Naive thymus-derived CD4-positive, alpha-beta T cell (primary cell): ENCODE measurements at regions of chr1 and their contacts with region 1.

Region 1: GRCh38 chr1:85276215-85276977 is at the start of gene BCL10:
- DNase-seq: peak; percentile 95 to 98 (median 97)
- ATAC-seq: peak; percentile 97
- H3K4me3 ChIP-seq: peak within 1 kb of the TSS; percentile 89
- H3K4me3 Mint-ChIP-seq: peak within 1 kb of the TSS; percentile 82 to 95 (median 90)
- H3K27ac ChIP-seq: peak within 1 kb of the TSS; percentile 97
- H3K27ac Mint-ChIP-seq: peak within 1 kb of the TSS; percentile 84 to 97 (median 95)
- H3K4me1 ChIP-seq: peaks cover 17 to 28% of the 10 kb centered on the region in 2 donors
- H3K4me1 Mint-ChIP-seq: peaks cover 36 to 55% (median 47%) of the 10 kb centered on the region in 7 donors
- H3K27me3 ChIP-seq: no peaks in the 10 kb centered on the region
- H3K27me3 Mint-ChIP-seq: peaks cover 0 to 21% (median 0%) of the 10 kb centered on the region in 5 donors
- total RNA-seq, gene BCL10: 30.4 to 53.0 (median 35.4) TPM

Region 2: GRCh38 chr1:84077476-84078107 is 1198.8 kb before region 1 on chr1:
- CTCF ChIA-PET with region 1: no interaction called
- POLR2A ChIA-PET with region 1: no interaction called
- intact Hi-C with region 1: loop called in 1 of 2 experiments (anchors 5 kb)
- DNase-seq: peak; percentile 64 to 79 (median 72)
- ATAC-seq: peak; percentile 97
- H3K4me3 ChIP-seq: peak overlapping the region; percentile 79
- H3K4me3 Mint-ChIP-seq: peak overlapping the region; percentile 84 to 93 (median 90)
- H3K27ac ChIP-seq: peak overlapping the region; percentile 66
- H3K27ac Mint-ChIP-seq: peak overlapping the region; percentile 23 to 87 (median 75)
- H3K4me1 ChIP-seq: peaks cover 9 to 10% of the 10 kb centered on the region in 2 donors
- H3K4me1 Mint-ChIP-seq: peaks cover 6 to 23% (median 14%) of the 10 kb centered on the region in 7 donors
- H3K27me3 ChIP-seq: no peaks in the 10 kb centered on the region
- H3K27me3 Mint-ChIP-seq: peaks cover 0 to 35% (median 0%) of the 10 kb centered on the region in 5 donors

Region 3: GRCh38 chr1:84478876-84479868 is 797.2 kb before region 1 on chr1 and contains the start of gene RPF1:
- CTCF ChIA-PET with region 1: no interaction called
- POLR2A ChIA-PET with region 1: no interaction called
- intact Hi-C with region 1: loop called (anchors 1 kb)
- DNase-seq: peak; percentile 61 to 88 (median 83)
- ATAC-seq: peak; percentile 97
- H3K4me3 ChIP-seq: peak within 1 kb of the TSS; percentile 72
- H3K4me3 Mint-ChIP-seq: peak within 1 kb of the TSS; percentile 88 to 100 (median 98)
- H3K27ac ChIP-seq: peak within 1 kb of the TSS; percentile 80
- H3K27ac Mint-ChIP-seq: peak within 1 kb of the TSS; percentile 98 to 100 (median 99)
- H3K4me1 ChIP-seq: peaks cover 22 to 28% of the 10 kb centered on the region in 2 donors
- H3K4me1 Mint-ChIP-seq: peaks cover 29 to 60% (median 49%) of the 10 kb centered on the region in 7 donors
- H3K27me3 ChIP-seq: peaks cover 0 to 7% of the 10 kb centered on the region in 2 donors
- H3K27me3 Mint-ChIP-seq: peaks cover 21 to 35% (median 26%) of the 10 kb centered on the region in 5 donors
- total RNA-seq, gene RPF1: 35.5 to 52.3 (median 44.1) TPM

Region 4: DNA sequence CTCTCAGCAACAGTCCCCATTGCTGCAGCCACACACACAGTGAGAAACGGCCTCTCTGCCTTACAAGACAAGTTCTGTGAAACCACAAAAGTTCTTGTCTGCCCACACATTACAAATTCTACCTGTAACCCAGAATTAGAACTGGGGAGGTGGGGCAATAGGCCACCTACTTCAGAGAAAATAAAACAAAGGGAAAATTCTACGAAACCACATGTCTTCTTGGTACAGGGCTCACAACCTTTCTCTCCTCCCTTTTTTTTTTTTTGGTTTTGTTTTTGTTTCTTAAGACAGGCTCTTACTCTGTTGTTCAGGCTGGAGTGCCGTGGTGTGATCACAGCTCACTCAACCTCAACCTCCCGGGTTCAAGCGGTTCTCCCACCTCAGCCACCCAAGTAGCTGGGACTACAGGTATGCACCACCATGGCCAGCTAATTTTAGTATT is 413.6 kb before region 1 on chr1:
- CTCF ChIA-PET with region 1: no interaction called
- POLR2A ChIA-PET with region 1: no interaction called
- intact Hi-C with region 1: loop called in 1 of 2 experiments (anchors 5 kb)
- DNase-seq: peak in 8 of 9 donors; percentile 42 to 81 (median 66)
- ATAC-seq: peak; percentile 87
- H3K4me3 ChIP-seq: peak overlapping the region; percentile 44
- H3K4me3 Mint-ChIP-seq: peak overlapping the region; percentile 71 to 89 (median 83)
- H3K27ac ChIP-seq: peak overlapping the region; percentile 67
- H3K27ac Mint-ChIP-seq: peak overlapping the region; percentile 83 to 95 (median 92)
- H3K4me1 ChIP-seq: peaks cover 30 to 46% of the 10 kb centered on the region in 2 donors
- H3K4me1 Mint-ChIP-seq: peaks cover 31 to 69% (median 59%) of the 10 kb centered on the region in 7 donors
- H3K27me3 ChIP-seq: no peaks in the 10 kb centered on the region
- H3K27me3 Mint-ChIP-seq: peaks cover 0 to 6% (median 0%) of the 10 kb centered on the region in 5 donors

Region 5: GRCh38 chr1:85061711-85062424 is 214.5 kb before region 1 on chr1:
- CTCF ChIA-PET with region 1: no interaction called
- POLR2A ChIA-PET with region 1: no interaction called
- intact Hi-C with region 1: loop called in 1 of 2 experiments (anchors 1 kb)
- DNase-seq: peak; percentile 49 to 93 (median 86)
- ATAC-seq: peak; percentile 99
- H3K4me3 ChIP-seq: peak overlapping the region; percentile 57
- H3K4me3 Mint-ChIP-seq: peak overlapping the region; percentile 79 to 93 (median 88)
- H3K27ac ChIP-seq: peak overlapping the region; percentile 24
- H3K27ac Mint-ChIP-seq: peak overlapping the region; percentile 57 to 96 (median 92)
- H3K4me1 ChIP-seq: peaks cover 4 to 6% of the 10 kb centered on the region in 2 donors
- H3K4me1 Mint-ChIP-seq: peaks cover 11 to 21% (median 14%) of the 10 kb centered on the region in 7 donors
- H3K27me3 ChIP-seq: no peaks in the 10 kb centered on the region
- H3K27me3 Mint-ChIP-seq: peaks cover 3 to 39% (median 13%) of the 10 kb centered on the region in 5 donors

Region 6: DNA sequence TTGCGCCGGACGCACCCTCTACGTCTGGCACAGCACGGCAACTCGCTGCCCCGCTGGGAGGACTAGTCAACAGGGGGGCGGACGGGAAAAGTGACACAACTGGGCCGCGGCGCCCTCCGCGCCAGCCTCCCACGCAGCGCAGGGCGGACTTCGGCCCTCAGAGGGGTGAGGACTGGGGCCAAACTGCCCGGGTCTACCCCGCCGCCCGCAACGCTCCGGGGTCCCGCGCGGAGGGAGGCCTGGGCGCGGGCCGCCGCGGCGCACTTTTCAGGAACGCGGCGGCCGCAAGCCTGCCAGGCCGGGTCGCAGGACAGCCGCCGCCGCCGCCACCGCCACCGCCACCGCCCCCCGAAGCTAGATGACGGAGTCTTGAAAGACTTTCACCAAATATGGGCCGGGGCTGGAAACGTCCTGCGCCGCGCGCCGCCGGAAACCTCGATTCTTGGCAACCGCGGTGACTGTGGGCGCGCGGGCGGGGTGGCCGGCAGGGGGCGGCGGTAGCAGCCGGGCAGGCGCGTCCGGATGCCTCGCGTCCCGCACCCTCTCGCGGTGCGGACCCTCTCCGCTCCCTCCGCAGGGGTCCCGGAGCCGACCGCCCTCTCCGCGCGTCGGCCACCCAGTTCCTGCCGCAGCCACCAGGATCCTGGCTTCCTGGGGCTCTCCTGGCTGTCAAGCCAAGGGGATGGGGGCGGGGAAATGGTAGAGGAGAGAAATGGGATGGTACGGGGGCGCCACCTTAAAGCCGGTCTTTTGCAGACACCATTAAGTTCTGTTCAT is 300.4 kb after region 1 on chr1:
- CTCF ChIA-PET with region 1: no interaction called
- POLR2A ChIA-PET with region 1: no interaction called
- intact Hi-C with region 1: loop called in 1 of 2 experiments (anchors 1 kb)
- DNase-seq: peak in 1 of 9 donors; percentile 73
- ATAC-seq: peak; percentile 33
- H3K4me3 ChIP-seq: no peak overlapping the region
- H3K4me3 Mint-ChIP-seq: peak overlapping the region; percentile 44 to 79 (median 69)
- H3K27ac ChIP-seq: no peak overlapping the region
- H3K27ac Mint-ChIP-seq: peak overlapping the region in 2 of 9 donors; percentile 10 to 23
- H3K4me1 ChIP-seq: no peaks in the 10 kb centered on the region
- H3K4me1 Mint-ChIP-seq: peaks cover 5 to 33% (median 29%) of the 10 kb centered on the region in 7 donors
- H3K27me3 ChIP-seq: peaks cover 0 to 12% of the 10 kb centered on the region in 2 donors
- H3K27me3 Mint-ChIP-seq: peaks cover 65 to 74% (median 73%) of the 10 kb centered on the region in 5 donors

Region 7: GRCh38 chr1:86913896-86914634 is 1637.7 kb after region 1 on chr1 and contains the start of gene SELENOF:
- CTCF ChIA-PET with region 1: no interaction called
- POLR2A ChIA-PET with region 1: no interaction called
- intact Hi-C with region 1: loop called (anchors 2 to 5 kb)
- DNase-seq: peak; percentile 94 to 100 (median 99)
- ATAC-seq: peak; percentile 93
- H3K4me3 ChIP-seq: peak within 1 kb of the TSS; percentile 96
- H3K4me3 Mint-ChIP-seq: no peak within 1 kb of the TSS
- H3K27ac ChIP-seq: peak within 1 kb of the TSS; percentile 89
- H3K27ac Mint-ChIP-seq: no peak within 1 kb of the TSS
- H3K4me1 ChIP-seq: peaks cover 15 to 32% of the 10 kb centered on the region in 2 donors
- H3K4me1 Mint-ChIP-seq: peaks cover 6 to 50% (median 43%) of the 10 kb centered on the region in 7 donors
- H3K27me3 ChIP-seq: no peaks in the 10 kb centered on the region
- H3K27me3 Mint-ChIP-seq: no peaks in the 10 kb centered on the region
- total RNA-seq, gene SELENOF: 109 to 196 (median 133) TPM